ENCODE measurements at regions of chr11 and their contacts with region 1.

Region 1: GRCh38 chr11:73625696-73626318 is 20.6 kb upstream of the PLEKHB1 start:
- DNase-seq: peak; percentile 38 to 75 (median 66)
- ATAC-seq: peak; percentile 88
- H3K4me3 ChIP-seq: no peak overlapping the region
- H3K4me3 Mint-ChIP-seq: peak overlapping the region in 1 of 10 donors; percentile 68
- H3K27ac ChIP-seq: no peak overlapping the region
- H3K27ac Mint-ChIP-seq: peak overlapping the region in 1 of 9 donors; percentile 59
- H3K4me1 ChIP-seq: peaks cover 0 to 3% of the 10 kb centered on the region in 2 donors
- H3K4me1 Mint-ChIP-seq: peaks cover 0 to 15% (median 0%) of the 10 kb centered on the region in 7 donors
- H3K27me3 ChIP-seq: no peaks in the 10 kb centered on the region
- H3K27me3 Mint-ChIP-seq: peaks cover 13 to 29% (median 27%) of the 10 kb centered on the region in 5 donors

Region 2: DNA sequence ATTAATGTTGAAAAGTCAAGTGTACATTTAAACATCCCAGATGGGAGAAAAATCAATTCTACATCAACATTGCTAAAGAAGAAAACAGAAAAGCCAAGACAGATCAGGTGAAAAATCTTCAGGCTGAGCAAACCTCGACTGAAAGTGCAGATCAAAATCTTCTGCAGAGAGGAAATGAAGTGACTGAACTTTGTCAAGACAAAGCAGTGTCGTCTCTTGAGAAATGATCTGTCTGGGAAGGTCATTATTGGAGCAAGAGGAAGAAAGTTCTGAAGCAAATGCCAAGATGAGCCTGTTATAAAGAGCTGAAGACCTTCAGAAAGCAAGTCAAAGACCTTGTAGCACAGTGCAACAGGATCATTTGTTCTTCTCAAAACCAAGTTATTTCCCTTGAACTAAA is 14.8 kb after region 1 on chr11:
- CTCF ChIA-PET with region 1: interaction called, 27 read pairs
- POLR2A ChIA-PET with region 1: no interaction called
- intact Hi-C with region 1: no loop called
- DNase-seq: peak in 4 of 9 donors; percentile 16 to 31 (median 20)
- ATAC-seq: peak; percentile 42
- H3K4me3 ChIP-seq: no peak overlapping the region
- H3K4me3 Mint-ChIP-seq: peak overlapping the region in 7 of 10 donors; percentile 1 to 61 (median 32)
- H3K27ac ChIP-seq: peak overlapping the region; percentile 61
- H3K27ac Mint-ChIP-seq: peak overlapping the region in 8 of 9 donors; percentile 61 to 91 (median 79)
- H3K4me1 ChIP-seq: peaks cover 0 to 16% of the 10 kb centered on the region in 2 donors
- H3K4me1 Mint-ChIP-seq: peaks cover 6 to 24% (median 15%) of the 10 kb centered on the region in 7 donors
- H3K27me3 ChIP-seq: no peaks in the 10 kb centered on the region
- H3K27me3 Mint-ChIP-seq: peaks cover 0 to 5% (median 0%) of the 10 kb centered on the region in 5 donors

Region 3: GRCh38 chr11:73931039-73931645 is 305.3 kb after region 1 on chr11:
- CTCF ChIA-PET with region 1: interaction called, 3 read pairs
- POLR2A ChIA-PET with region 1: no interaction called
- intact Hi-C with region 1: loop called in 1 of 2 experiments (anchors 1 kb)
- DNase-seq: peak in 3 of 9 donors; percentile 3 to 18 (median 10)
- ATAC-seq: peak; percentile 37
- H3K4me3 ChIP-seq: no peak overlapping the region
- H3K4me3 Mint-ChIP-seq: no peak overlapping the region
- H3K27ac ChIP-seq: no peak overlapping the region
- H3K27ac Mint-ChIP-seq: peak overlapping the region in 3 of 9 donors; percentile 48 to 65 (median 53)
- H3K4me1 ChIP-seq: no peaks in the 10 kb centered on the region
- H3K4me1 Mint-ChIP-seq: no peaks in the 10 kb centered on the region
- H3K27me3 ChIP-seq: no peaks in the 10 kb centered on the region
- H3K27me3 Mint-ChIP-seq: no peaks in the 10 kb centered on the region

Measured in naive thymus-derived CD4-positive, alpha-beta T cell (primary cell).